Panc1 (cell line): ENCODE measurements at regions of chr2 and their contacts with region 1.

Region 1: GRCh38 chr2:98601532-98602132 is 6.7 kb downstream of the COA5 start:
- DNase-seq: no peak
- ATAC-seq: peak; percentile 97
- H3K4me3 ChIP-seq: no peak overlapping the region
- H3K27ac ChIP-seq: no peak overlapping the region
- H3K4me1 ChIP-seq: no peaks in the 10 kb centered on the region
- H3K27me3 ChIP-seq: no peaks in the 10 kb centered on the region
- CTCF ChIP-seq: peak; percentile 81

Region 2: GRCh38 chr2:98412751-98413458 is 188.7 kb before region 1 on chr2:
- CTCF ChIA-PET with region 1: no interaction called
- POLR2A ChIA-PET with region 1: interaction called, 3 read pairs
- in situ Hi-C with region 1: no loop called
- intact Hi-C with region 1: loop called (anchors 2 kb)
- DNase-seq: peak; percentile 46
- ATAC-seq: peak; percentile 91
- H3K4me3 ChIP-seq: no peak overlapping the region
- H3K27ac ChIP-seq: no peak overlapping the region
- H3K4me1 ChIP-seq: no peaks in the 10 kb centered on the region
- H3K27me3 ChIP-seq: peaks cover 13% of the 10 kb centered on the region
- CTCF ChIP-seq: peak; percentile 83

Region 3: DNA sequence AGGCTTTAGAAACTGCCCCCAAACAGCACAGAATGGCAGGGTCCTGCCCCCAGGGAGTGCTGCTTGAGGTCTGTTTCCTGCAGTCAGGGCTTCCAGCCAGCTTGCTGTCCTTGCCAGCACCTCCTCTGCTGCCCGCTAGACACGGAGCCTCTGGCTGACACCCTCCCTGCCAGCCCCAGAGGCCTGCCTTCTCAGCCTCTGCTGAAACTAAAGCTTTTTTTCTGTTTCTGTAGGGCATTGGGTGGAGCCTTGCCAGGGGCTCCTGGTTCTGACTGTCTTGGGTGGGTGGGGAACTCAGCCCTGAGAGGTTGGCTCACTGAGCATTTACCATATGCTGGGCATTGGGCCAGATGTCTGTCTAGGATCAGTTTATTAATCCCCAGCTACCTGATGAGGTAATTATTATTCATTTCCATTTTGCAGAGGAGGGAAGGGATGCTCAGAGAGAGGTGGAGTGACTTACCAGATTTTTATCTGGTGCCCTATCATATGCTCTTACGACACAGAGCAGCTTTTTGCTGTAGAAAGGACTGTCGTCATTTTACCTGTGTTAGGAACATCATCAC is 121.6 kb before region 1 on chr2:
- CTCF ChIA-PET with region 1: no interaction called
- POLR2A ChIA-PET with region 1: no interaction called
- in situ Hi-C with region 1: no loop called
- intact Hi-C with region 1: no loop called
- DNase-seq: no peak
- ATAC-seq: no peak
- H3K4me3 ChIP-seq: no peak overlapping the region
- H3K27ac ChIP-seq: no peak overlapping the region
- H3K4me1 ChIP-seq: no peaks in the 10 kb centered on the region
- H3K27me3 ChIP-seq: no peaks in the 10 kb centered on the region
- CTCF ChIP-seq: no peak

Region 4: GRCh38 chr2:98623657-98624056 is 22.0 kb after region 1 on chr2:
- CTCF ChIA-PET with region 1: no interaction called
- POLR2A ChIA-PET with region 1: interaction called, 10 read pairs
- in situ Hi-C with region 1: no loop called
- intact Hi-C with region 1: no loop called
- DNase-seq: no peak
- ATAC-seq: no peak
- H3K4me3 ChIP-seq: no peak overlapping the region
- H3K27ac ChIP-seq: no peak overlapping the region
- H3K4me1 ChIP-seq: no peaks in the 10 kb centered on the region
- H3K27me3 ChIP-seq: no peaks in the 10 kb centered on the region; the same call in 1 of the 2 replicates
- CTCF ChIP-seq: no peak

Region 5: GRCh38 chr2:98795891-98796676 is 194.5 kb after region 1 on chr2:
- CTCF ChIA-PET with region 1: no interaction called
- POLR2A ChIA-PET with region 1: no interaction called
- in situ Hi-C with region 1: no loop called
- intact Hi-C with region 1: no loop called
- DNase-seq: no peak
- ATAC-seq: no peak
- H3K4me3 ChIP-seq: no peak overlapping the region
- H3K27ac ChIP-seq: no peak overlapping the region
- H3K4me1 ChIP-seq: no peaks in the 10 kb centered on the region
- H3K27me3 ChIP-seq: peaks cover 6% of the 10 kb centered on the region
- CTCF ChIP-seq: no peak

Region 6: GRCh38 chr2:99127981-99128380 is 526.3 kb after region 1 on chr2:
- CTCF ChIA-PET with region 1: no interaction called
- POLR2A ChIA-PET with region 1: no interaction called
- in situ Hi-C with region 1: no loop called
- intact Hi-C with region 1: no loop called
- DNase-seq: no peak
- ATAC-seq: no peak
- H3K4me3 ChIP-seq: no peak overlapping the region
- H3K27ac ChIP-seq: no peak overlapping the region
- H3K4me1 ChIP-seq: no peaks in the 10 kb centered on the region
- H3K27me3 ChIP-seq: no peaks in the 10 kb centered on the region
- CTCF ChIP-seq: no peak